Endothelial cell of umbilical vein (primary cell): ENCODE measurements at regions of chr17 and their contacts with region 1.

Region 1: DNA sequence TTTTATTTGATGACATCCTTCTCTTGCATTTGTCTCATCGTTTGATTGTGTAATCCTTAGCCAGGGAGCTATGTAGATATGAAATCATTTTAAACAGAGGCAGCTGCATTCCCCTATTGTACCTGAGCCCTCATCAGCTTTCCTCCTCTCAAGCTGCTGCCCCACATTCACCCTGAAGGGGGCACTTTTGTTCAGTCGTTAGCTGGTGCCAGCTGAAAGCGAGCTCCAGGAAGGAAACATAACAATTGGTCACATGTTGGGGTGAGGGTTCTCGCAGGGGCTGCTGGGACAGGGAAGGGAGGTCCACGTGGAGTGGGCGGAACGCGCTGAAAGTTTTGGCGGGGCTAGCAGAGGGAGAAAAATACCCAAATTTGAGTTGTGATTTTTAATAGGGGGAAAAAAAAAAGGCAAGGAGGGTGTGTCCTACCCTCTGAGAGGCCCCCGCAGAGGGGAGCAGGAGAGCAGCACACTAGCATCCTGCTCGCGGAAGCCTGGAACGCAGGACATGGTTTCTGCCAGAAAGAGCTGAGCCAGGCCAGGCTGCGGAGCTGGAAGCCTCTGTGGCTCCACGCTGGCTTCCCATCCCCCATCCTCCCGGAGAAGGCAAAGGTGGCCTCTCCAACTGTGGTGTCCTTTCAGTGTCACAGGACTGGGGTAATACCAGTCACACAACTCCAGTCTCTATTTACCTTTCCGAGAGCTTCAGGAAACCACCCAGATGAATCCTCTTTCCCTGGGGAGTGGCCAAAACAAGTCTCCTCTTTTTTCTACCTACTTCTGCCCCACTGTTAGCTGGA is 8.5 kb upstream of the MSL1 start:
- DNase-seq: peak; percentile 94
- H3K4me3 ChIP-seq: peak overlapping the region in 2 of 3 experiments; percentile 23 to 43
- H3K27ac ChIP-seq: peak overlapping the region; percentile 76
- H3K4me1 ChIP-seq: peaks cover 52% of the 10 kb centered on the region
- H3K27me3 ChIP-seq: no peaks in the 10 kb centered on the region
- CTCF ChIP-seq: peak; percentile 47 to 86
- POLR2A ChIP-seq: no peak

Region 2: GRCh38 chr17:39376434-39376833 is 736.9 kb before region 1 on chr17:
- CTCF ChIA-PET with region 1: no interaction called
- POLR2A ChIA-PET with region 1: no interaction called
- dilution Hi-C with region 1: no loop called
- intact Hi-C with region 1: no loop called
- DNase-seq: no peak
- H3K4me3 ChIP-seq: no peak overlapping the region
- H3K27ac ChIP-seq: no peak overlapping the region
- H3K4me1 ChIP-seq: no peaks in the 10 kb centered on the region
- H3K27me3 ChIP-seq: no peaks in the 10 kb centered on the region
- CTCF ChIP-seq: no peak
- POLR2A ChIP-seq: no peak

Region 3: DNA sequence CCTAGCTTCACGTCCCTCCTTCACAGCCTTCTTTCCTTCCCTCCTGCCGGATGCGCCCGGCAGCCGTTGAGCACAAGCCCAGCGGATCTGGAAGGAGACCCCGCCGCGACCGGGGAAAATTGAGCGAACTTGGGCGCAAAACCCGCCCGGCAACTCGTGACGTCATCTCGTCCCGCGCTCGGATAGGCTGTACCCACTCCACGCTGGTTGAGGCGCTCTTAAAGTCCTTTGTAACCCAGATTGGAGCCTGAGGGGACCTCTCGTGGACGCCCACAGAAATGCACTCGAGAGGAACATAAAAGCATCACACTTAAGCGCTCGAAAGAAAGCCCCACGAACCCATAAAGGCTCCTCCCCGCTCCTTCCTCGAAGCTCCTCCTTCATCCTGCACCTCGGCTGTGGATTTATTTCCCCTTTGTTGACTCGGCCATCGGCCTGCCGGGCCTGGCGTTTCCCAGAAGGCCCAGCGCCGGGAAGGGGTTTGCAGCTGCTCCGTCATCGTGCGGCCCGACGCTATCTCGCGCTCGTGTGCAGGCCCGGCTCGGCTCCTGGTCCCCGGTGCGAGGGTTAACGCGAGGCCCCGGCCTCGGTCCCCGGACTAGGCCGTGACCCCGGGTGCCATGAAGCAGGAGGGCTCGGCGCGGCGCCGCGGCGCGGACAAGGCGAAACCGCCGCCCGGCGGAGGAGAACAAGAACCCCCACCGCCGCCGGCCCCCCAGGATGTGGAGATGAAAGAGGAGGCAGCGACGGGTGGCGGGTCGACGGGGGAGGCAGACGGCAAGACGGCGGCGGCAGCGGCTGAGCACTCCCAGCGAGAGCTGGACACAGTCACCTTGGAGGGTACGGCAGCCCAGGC is 132.7 kb before region 1 on chr17 and contains the start of gene PSMD3:
- CTCF ChIA-PET with region 1: no interaction called
- POLR2A ChIA-PET with region 1: no interaction called
- dilution Hi-C with region 1: no loop called
- intact Hi-C with region 1: loop called (anchors 1 kb)
- DNase-seq: peak; percentile 100
- H3K4me3 ChIP-seq: peak within 1 kb of the TSS; percentile 84 to 100 (median 87)
- H3K27ac ChIP-seq: peak within 1 kb of the TSS; percentile 87
- H3K4me1 ChIP-seq: peaks cover 21% of the 10 kb centered on the region
- H3K27me3 ChIP-seq: peaks cover 6 to 16% of the 10 kb centered on the region in 2 experiments
- CTCF ChIP-seq: peak; percentile 73 to 77
- POLR2A ChIP-seq: peak; percentile 75
- total RNA-seq, gene PSMD3: 136 and 142 TPM in 2 replicates

Region 4: GRCh38 chr17:40026816-40027613 is 86.3 kb before region 1 on chr17:
- CTCF ChIA-PET with region 1: interaction called, 10 read pairs
- POLR2A ChIA-PET with region 1: interaction called, 3 read pairs
- dilution Hi-C with region 1: no loop called
- intact Hi-C with region 1: no loop called
- DNase-seq: peak; percentile 74
- H3K4me3 ChIP-seq: no peak overlapping the region
- H3K27ac ChIP-seq: peak overlapping the region; percentile 99
- H3K4me1 ChIP-seq: peaks cover 48% of the 10 kb centered on the region
- H3K27me3 ChIP-seq: no peaks in the 10 kb centered on the region
- CTCF ChIP-seq: peak; percentile 81 to 93
- POLR2A ChIP-seq: no peak

Region 5: DNA sequence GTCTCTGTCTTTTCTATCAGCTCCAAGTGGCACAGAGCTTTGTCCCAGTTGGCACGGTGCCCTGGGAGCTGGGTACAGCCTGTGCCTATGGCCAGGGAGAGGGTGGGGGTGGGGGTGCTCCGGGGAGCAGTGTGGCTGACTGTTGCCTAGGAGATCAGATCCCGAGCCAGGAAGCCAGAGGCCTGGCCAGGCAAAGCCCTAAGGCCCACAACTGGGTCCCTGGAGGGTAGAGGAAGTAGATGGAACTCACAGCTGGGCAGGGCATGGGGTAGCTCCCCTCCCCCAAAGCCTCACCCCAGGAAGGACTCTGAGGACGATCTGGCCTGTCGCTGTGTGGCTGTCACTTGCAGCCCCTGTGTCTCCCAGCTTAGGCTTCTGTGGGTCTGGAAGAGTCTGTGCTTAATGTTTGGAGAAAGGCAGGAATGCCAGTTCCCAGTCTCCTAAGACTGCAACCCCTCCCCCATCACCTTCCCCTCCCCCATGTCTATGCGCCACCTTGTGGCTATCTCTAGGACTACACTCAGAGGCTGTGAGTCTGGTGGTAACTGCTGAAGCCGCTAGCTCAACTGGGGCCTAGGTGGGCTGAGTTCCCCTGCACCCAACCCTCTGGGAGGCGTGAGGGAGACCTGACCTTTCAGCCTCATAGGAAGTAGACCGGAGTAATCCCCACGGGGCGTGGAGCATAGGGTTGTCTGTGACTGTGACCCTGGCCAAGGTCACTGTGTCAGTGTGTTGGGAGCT is 37.9 kb before region 1 on chr17:
- CTCF ChIA-PET with region 1: interaction called, 41 read pairs
- POLR2A ChIA-PET with region 1: no interaction called
- dilution Hi-C with region 1: no loop called
- intact Hi-C with region 1: loop called (anchors 1 kb)
- DNase-seq: peak; percentile 63
- H3K4me3 ChIP-seq: no peak overlapping the region
- H3K27ac ChIP-seq: no peak overlapping the region
- H3K4me1 ChIP-seq: peaks cover 13% of the 10 kb centered on the region
- H3K27me3 ChIP-seq: no peaks in the 10 kb centered on the region
- CTCF ChIP-seq: peak; percentile 68 to 91
- POLR2A ChIP-seq: no peak

Region 6: DNA sequence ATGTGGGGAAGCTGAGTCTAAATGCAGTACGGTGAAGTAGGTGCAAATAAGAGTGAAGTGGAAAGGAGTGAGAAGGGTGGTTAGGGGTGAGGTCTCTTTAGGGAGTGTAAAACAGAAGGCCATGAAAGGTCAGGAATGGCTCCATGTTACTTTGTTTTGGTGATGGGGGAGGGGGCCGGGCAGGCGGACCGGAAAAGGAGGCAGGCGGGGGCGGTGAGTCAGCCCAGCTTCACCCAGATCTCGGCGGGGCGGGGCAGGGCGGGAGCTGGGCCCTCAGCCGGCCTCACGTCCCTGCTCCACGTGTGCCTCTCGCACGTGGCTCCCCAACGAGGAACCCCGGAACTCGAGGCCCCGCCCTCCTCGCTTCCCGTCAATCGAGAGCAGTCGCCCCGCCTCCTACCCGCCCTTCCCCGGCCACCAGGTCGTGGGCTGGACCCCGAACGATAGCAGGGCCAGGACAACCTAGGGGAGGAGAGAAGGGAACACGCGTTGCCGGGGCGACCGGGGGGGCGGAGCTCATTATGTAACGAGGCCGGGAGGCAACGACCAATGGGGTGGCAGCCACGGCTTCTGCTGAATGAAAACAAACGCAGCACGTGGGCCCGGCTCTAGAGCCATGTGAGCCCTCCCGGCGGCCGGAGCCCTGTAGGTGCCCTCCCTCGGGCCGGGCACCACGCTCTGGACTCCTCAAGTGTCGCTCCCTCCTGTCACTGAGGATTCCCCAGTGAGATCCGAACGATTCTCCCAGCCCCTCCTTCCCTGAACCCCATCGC is 14.3 kb before region 1 on chr17:
- CTCF ChIA-PET with region 1: interaction called, 138 read pairs
- POLR2A ChIA-PET with region 1: interaction called, 56 read pairs
- dilution Hi-C with region 1: no loop called
- intact Hi-C with region 1: loop called (anchors 1 kb)
- DNase-seq: peak; percentile 97
- H3K4me3 ChIP-seq: peak overlapping the region; percentile 26 to 60 (median 48)
- H3K27ac ChIP-seq: peak overlapping the region; percentile 77
- H3K4me1 ChIP-seq: peaks cover 39% of the 10 kb centered on the region
- H3K27me3 ChIP-seq: no peaks in the 10 kb centered on the region
- CTCF ChIP-seq: no peak
- POLR2A ChIP-seq: peak; percentile 53

Region 7: GRCh38 chr17:40168262-40168832 is 55.0 kb after region 1 on chr17:
- CTCF ChIA-PET with region 1: interaction called, 82 read pairs
- POLR2A ChIA-PET with region 1: interaction called, 13 read pairs
- dilution Hi-C with region 1: no loop called
- intact Hi-C with region 1: loop called (anchors 1 kb)
- DNase-seq: peak; percentile 65
- H3K4me3 ChIP-seq: no peak overlapping the region
- H3K27ac ChIP-seq: peak overlapping the region; percentile 4
- H3K4me1 ChIP-seq: no peaks in the 10 kb centered on the region
- H3K27me3 ChIP-seq: no peaks in the 10 kb centered on the region
- CTCF ChIP-seq: peak; percentile 53 to 65
- POLR2A ChIP-seq: no peak

Region 8: DNA sequence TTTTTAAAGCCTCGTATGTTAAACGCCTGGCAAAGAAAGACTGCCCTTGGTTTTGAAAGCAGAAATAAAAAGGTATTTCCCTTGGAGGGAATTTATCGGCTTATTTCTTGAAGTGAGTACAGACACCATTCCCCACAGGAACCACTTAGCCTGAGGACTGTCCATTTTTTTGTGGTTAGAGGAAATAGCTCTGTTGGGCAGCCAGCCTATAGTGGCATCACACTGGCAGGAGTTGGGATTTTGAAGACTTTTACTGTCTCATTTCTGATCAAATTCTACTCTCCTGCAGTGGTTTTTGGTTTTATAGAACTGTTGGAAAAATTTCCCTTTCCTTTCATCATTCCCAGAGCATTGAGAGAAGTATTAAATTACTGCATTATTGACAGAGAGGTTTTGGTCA is 140.3 kb after region 1 on chr17:
- CTCF ChIA-PET with region 1: no interaction called
- POLR2A ChIA-PET with region 1: no interaction called
- dilution Hi-C with region 1: no loop called
- intact Hi-C with region 1: no loop called
- DNase-seq: no peak
- H3K4me3 ChIP-seq: no peak overlapping the region
- H3K27ac ChIP-seq: no peak overlapping the region
- H3K4me1 ChIP-seq: peaks cover 8% of the 10 kb centered on the region
- H3K27me3 ChIP-seq: no peaks in the 10 kb centered on the region
- CTCF ChIP-seq: no peak
- POLR2A ChIP-seq: no peak

Region 9: GRCh38 chr17:40854159-40854814 is 741.0 kb after region 1 on chr17:
- CTCF ChIA-PET with region 1: no interaction called
- POLR2A ChIA-PET with region 1: no interaction called
- dilution Hi-C with region 1: no loop called
- intact Hi-C with region 1: no loop called
- DNase-seq: peak; percentile 59
- H3K4me3 ChIP-seq: no peak overlapping the region
- H3K27ac ChIP-seq: no peak overlapping the region
- H3K4me1 ChIP-seq: peaks cover 8% of the 10 kb centered on the region
- H3K27me3 ChIP-seq: peaks cover 2 to 5% of the 10 kb centered on the region in 2 experiments
- CTCF ChIP-seq: no peak
- POLR2A ChIP-seq: no peak